Transverse colon (tissue), 4 donors: ENCODE measurements at regions of chrX and their contacts with region 1.

Region 1: DNA sequence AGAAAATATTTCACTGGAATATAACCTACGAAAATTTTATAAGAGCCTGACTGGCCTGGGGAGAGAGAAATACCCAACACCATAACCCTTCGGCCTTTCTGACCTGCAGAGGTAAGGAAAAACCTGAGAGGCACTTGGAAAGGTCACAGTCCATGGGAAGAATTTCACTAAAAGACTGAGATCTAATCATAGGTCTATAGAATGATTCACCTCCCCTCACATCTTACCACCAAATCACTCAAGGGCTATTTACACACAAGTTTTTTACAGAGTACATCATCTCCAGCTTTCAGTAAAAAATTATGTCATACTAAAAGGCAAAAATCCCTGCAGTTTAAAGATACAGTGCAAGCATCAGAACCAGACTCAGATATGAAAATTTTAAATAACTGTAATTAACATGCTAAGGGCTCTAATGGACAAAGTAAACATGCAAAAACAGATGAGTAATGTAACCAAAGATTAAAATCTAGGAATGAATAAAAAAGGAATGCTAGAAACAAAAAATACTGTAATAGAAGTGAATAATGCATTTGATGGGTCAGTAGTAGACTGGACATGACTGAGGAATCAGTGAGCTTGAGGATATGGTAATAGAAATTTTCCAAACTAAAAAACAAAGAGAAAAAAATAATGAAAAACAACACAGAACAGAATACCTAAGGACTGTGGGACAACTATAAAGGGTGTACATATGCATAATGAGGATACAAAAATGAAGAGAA is 32.1 kb upstream of the SLC16A2 start:
- DNase-seq: no peak
- H3K4me3 ChIP-seq: no peak overlapping the region
- H3K27ac ChIP-seq: no peak overlapping the region
- H3K4me1 ChIP-seq: no peaks in the 10 kb centered on the region
- H3K27me3 ChIP-seq: no peaks in the 10 kb centered on the region
- CTCF ChIP-seq: no peak
- EP300 ChIP-seq: no peak
- POLR2A ChIP-seq: no peak

Region 2: DNA sequence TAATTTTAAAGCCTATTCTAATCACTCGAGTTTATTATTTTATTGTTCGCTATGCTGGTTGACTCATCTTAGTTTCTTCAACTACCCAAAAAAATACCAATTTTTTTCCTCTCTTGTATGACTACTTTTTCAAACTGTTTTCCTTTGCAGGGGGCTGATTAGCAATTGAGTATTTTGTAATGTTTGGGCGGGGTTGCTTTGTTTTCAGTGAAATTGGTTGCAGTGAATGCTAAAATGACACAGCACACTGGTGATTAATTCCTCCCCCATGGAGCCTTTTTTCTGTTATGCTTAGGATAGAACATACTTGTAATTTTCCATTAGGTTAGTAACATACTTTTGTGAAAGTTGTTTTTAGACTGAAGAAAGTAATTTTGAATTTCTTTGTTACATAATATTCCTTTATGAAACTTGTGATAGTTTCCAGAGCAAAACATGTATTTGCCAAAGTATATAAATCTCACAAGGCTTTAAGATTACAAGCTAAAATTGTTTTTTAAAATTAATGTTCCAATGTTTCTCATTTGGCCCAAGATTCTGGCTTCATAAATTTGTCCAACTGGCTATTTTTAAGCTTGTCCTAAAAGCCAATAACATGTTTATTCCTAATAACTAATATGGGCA is 705.8 kb before region 1 on chrX:
- in situ Hi-C with region 1: no loop called
- intact Hi-C with region 1: no loop called
- DNase-seq: no peak
- H3K4me3 ChIP-seq: no peak overlapping the region
- H3K27ac ChIP-seq: no peak overlapping the region
- H3K4me1 ChIP-seq: no peaks in the 10 kb centered on the region
- H3K27me3 ChIP-seq: no peaks in the 10 kb centered on the region
- CTCF ChIP-seq: no peak
- EP300 ChIP-seq: no peak
- POLR2A ChIP-seq: no peak

Region 3: GRCh38 chrX:74230094-74230493 is 159.1 kb before region 1 on chrX:
- in situ Hi-C with region 1: no loop called
- intact Hi-C with region 1: no loop called
- DNase-seq: no peak
- H3K4me3 ChIP-seq: no peak overlapping the region
- H3K27ac ChIP-seq: no peak overlapping the region
- H3K4me1 ChIP-seq: no peaks in the 10 kb centered on the region
- H3K27me3 ChIP-seq: no peaks in the 10 kb centered on the region
- CTCF ChIP-seq: no peak
- EP300 ChIP-seq: no peak
- POLR2A ChIP-seq: no peak

Region 4: GRCh38 chrX:74280759-74281158 is 108.4 kb before region 1 on chrX:
- in situ Hi-C with region 1: no loop called
- intact Hi-C with region 1: no loop called
- DNase-seq: no peak
- H3K4me3 ChIP-seq: no peak overlapping the region
- H3K27ac ChIP-seq: no peak overlapping the region
- H3K4me1 ChIP-seq: no peaks in the 10 kb centered on the region
- H3K27me3 ChIP-seq: no peaks in the 10 kb centered on the region
- CTCF ChIP-seq: no peak
- EP300 ChIP-seq: no peak
- POLR2A ChIP-seq: no peak

Region 5: DNA sequence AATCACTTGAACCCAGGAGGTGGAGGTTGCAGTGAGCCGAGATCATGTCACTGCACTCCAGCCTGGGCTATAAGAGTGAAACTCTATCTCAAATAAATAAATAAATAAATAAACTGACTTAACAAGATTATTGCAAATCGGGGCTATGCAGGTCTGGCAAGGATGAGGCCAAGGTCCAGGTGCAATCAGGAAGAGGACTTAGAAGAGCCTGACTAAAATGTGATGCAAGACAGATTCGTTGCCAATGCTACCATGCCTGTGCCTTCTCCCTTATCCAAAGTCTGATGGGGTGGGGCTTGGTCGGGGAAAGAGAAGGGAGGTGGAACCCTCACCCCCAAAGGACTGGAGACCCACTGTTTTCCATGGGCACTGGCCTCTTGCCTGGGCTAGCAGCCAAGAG is 70.5 kb before region 1 on chrX:
- in situ Hi-C with region 1: no loop called
- intact Hi-C with region 1: loop called (anchors 5 kb)
- DNase-seq: peak; percentile 32
- H3K4me3 ChIP-seq: no peak overlapping the region
- H3K27ac ChIP-seq: no peak overlapping the region
- H3K4me1 ChIP-seq: no peaks in the 10 kb centered on the region
- H3K27me3 ChIP-seq: no peaks in the 10 kb centered on the region
- CTCF ChIP-seq: no peak
- EP300 ChIP-seq: no peak
- POLR2A ChIP-seq: no peak